ENCODE measurements at regions of chr3 and their contacts with region 1.

Region 1: DNA sequence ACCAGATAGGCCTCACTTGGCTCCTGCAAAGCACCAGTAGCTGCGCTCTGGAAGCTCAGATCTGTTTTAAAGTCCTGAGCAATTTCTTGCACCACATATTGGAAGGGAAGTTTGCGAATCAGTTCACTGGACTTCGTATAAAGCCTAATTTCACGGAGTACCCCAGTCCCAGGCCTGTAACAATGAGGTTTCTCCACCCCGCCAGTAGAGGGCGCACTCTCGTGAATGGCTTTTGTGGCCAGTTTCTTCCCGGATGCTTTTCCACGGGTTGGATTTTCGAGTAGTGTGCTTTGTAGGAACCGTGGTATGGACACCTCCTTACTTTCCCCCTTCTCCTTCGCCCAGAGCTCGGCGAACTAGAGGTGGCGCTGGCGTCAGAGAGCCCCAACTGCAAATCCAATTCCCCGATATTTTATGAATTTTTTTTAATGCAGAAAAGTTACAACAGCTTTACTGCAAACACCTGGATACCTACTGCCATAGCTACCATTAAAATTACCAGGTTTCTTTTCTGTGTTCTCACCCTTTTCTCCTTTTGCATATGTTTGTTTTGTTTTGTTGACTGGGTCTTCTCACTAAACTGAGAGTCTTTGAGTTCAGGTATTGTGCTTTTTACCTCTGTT is 13.3 kb downstream of the RARB start:
- DNase-seq: peak; percentile 30
- H3K4me3 Mint-ChIP-seq: no peak overlapping the region
- H3K27ac Mint-ChIP-seq: no peak overlapping the region
- H3K4me1 Mint-ChIP-seq: no peaks in the 10 kb centered on the region
- H3K27me3 Mint-ChIP-seq: no peaks in the 10 kb centered on the region
- CTCF ChIP-seq: peak; percentile 77

Region 2: DNA sequence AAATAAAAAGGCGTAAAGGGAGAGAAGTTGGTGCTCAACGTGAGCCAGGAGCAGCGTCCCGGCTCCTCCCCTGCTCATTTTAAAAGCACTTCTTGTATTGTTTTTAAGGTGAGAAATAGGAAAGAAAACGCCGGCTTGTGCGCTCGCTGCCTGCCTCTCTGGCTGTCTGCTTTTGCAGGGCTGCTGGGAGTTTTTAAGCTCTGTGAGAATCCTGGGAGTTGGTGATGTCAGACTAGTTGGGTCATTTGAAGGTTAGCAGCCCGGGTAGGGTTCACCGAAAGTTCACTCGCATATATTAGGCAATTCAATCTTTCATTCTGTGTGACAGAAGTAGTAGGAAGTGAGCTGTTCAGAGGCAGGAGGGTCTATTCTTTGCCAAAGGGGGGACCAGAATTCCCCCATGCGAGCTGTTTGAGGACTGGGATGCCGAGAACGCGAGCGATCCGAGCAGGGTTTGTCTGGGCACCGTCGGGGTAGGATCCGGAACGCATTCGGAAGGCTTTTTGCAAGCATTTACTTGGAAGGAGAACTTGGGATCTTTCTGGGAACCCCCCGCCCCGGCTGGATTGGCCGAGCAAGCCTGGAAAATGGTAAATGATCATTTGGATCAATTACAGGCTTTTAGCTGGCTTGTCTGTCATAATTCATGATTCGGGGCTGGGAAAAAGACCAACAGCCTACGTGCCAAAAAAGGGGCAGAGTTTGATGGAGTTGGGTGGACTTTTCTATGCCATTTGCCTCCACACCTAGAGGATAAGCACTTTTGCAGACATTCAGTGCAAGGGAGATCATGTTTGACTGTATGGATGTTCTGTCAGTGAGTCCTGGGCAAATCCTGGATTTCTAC is 13.2 kb before region 1 on chr3 and contains the start of gene RARB:
- CTCF ChIA-PET with region 1: interaction called, 10 read pairs
- POLR2A ChIA-PET with region 1: no interaction called
- intact Hi-C with region 1: no loop called
- DNase-seq: peak; percentile 53
- H3K4me3 Mint-ChIP-seq: peak within 1 kb of the TSS; percentile 57
- H3K27ac Mint-ChIP-seq: no peak within 1 kb of the TSS
- H3K4me1 Mint-ChIP-seq: peaks cover 12% of the 10 kb centered on the region
- H3K27me3 Mint-ChIP-seq: peaks cover 31% of the 10 kb centered on the region
- CTCF ChIP-seq: no peak
- total RNA-seq, gene RARB: not detected in 2 replicates

Region 3: DNA sequence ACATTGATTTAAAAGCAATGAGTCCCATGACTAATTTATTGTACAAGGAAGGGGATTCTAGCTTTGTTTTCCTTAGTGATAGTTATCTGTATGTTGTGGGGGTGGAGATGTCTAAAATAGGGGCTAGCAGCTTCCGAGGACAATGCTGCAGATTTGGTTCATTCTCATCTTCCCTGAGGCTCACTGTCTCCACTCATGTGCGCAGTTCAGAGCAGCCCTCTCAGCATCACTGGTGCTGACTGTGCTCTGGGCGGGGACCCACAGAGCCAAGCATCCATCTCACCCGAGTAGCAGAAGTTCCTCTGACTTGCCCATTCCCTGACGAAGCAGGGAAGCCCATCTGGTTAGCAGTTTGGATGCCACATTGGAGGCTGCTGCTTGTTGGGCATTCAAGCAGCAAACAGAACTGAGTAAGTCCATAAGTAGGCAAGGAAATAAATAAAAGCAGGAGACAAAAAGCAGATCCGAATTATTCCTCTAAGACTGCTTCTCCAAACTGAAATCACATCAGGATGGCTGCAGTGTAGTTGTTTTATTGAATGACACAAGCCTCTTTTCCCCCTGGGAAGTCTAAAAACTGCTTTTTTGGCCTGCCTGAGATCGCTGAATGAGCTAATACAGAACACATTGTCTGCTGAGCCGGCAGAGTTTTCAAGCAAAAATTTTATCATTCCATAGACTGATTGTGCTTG is 14.2 kb after region 1 on chr3:
- CTCF ChIA-PET with region 1: interaction called, 17 read pairs
- POLR2A ChIA-PET with region 1: interaction called, 3 read pairs
- intact Hi-C with region 1: no loop called
- DNase-seq: no peak
- H3K4me3 Mint-ChIP-seq: no peak overlapping the region
- H3K27ac Mint-ChIP-seq: no peak overlapping the region
- H3K4me1 Mint-ChIP-seq: peaks cover 4% of the 10 kb centered on the region
- H3K27me3 Mint-ChIP-seq: no peaks in the 10 kb centered on the region
- CTCF ChIP-seq: no peak

Measured in MCF 10A (cell line).